ENCODE measurements at regions of chr3 and their contacts with region 1.

Region 1: GRCh38 chr3:40580494-40581091 is 55.8 kb downstream of the ZNF621 start:
- DNase-seq: peak; percentile 58
- CTCF ChIP-seq: peak; percentile 91

Region 2: GRCh38 chr3:40427045-40427669 is 153.4 kb before region 1 on chr3:
- CTCF ChIA-PET with region 1: no interaction called
- POLR2A ChIA-PET with region 1: no interaction called
- DNase-seq: no peak
- CTCF ChIP-seq: no peak

Region 3: GRCh38 chr3:40566694-40567093 is 13.9 kb before region 1 on chr3:
- CTCF ChIA-PET with region 1: interaction called, 34 read pairs
- POLR2A ChIA-PET with region 1: no interaction called
- DNase-seq: no peak
- CTCF ChIP-seq: no peak

Region 4: GRCh38 chr3:40597441-40597840 is 16.8 kb after region 1 on chr3:
- CTCF ChIA-PET with region 1: interaction called, 13 read pairs
- POLR2A ChIA-PET with region 1: no interaction called
- DNase-seq: no peak
- CTCF ChIP-seq: no peak

Region 5: GRCh38 chr3:40803311-40803710 is 222.7 kb after region 1 on chr3:
- CTCF ChIA-PET with region 1: no interaction called
- POLR2A ChIA-PET with region 1: no interaction called
- DNase-seq: no peak
- CTCF ChIP-seq: no peak

Region 6: GRCh38 chr3:41881233-41881821 is 1300.7 kb after region 1 on chr3:
- CTCF ChIA-PET with region 1: interaction called, 146 read pairs
- POLR2A ChIA-PET with region 1: no interaction called
- DNase-seq: peak; percentile 31
- CTCF ChIP-seq: peak; percentile 68